ENCODE measurements at regions of chr3 and their contacts with region 1.

Region 1: GRCh38 chr3:101195951-101196713 is 124.2 kb downstream of the IMPG2 start:
- DNase-seq: peak in 1 of 2 donors; percentile 77
- H3K4me3 ChIP-seq: no peak overlapping the region
- H3K27ac ChIP-seq: no peak overlapping the region
- H3K4me1 ChIP-seq: peaks cover 0 to 10% (median 4%) of the 10 kb centered on the region in 4 donors
- H3K27me3 ChIP-seq: no peaks in the 10 kb centered on the region
- CTCF ChIP-seq: peak in 5 of 7 experiments; percentile 23 to 73 (median 59)
- EP300 ChIP-seq: no peak
- POLR2A ChIP-seq: no peak

Region 2: DNA sequence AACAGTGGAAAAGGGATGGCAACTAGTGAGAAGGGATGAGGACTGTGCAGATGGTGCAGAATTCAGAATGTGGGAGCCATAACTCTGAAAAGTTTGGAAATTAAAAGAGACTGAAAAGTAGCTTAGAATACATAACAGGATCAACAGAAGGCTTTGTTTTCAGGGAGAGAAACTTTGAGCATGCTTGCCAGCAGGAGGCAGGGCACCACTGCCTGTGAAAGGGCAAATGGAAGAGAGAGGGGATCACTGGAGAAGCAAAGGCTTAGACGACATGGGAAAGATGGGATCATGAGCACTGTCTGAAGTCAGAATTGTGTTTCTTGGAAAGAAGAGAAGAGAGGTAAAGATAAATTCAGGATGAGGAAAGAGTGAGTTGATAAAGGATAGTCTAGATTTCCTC is 302.5 kb before region 1 on chr3:
- intact Hi-C with region 1: loop called (anchors 10 kb)
- DNase-seq: peak in 1 of 2 donors; percentile 37
- H3K4me3 ChIP-seq: no peak overlapping the region
- H3K27ac ChIP-seq: no peak overlapping the region
- H3K4me1 ChIP-seq: peaks cover 0 to 8% (median under 1%) of the 10 kb centered on the region in 4 donors
- H3K27me3 ChIP-seq: no peaks in the 10 kb centered on the region
- CTCF ChIP-seq: peak in 5 of 7 experiments; percentile 10 to 41 (median 32)
- EP300 ChIP-seq: no peak
- POLR2A ChIP-seq: no peak

Region 3: DNA sequence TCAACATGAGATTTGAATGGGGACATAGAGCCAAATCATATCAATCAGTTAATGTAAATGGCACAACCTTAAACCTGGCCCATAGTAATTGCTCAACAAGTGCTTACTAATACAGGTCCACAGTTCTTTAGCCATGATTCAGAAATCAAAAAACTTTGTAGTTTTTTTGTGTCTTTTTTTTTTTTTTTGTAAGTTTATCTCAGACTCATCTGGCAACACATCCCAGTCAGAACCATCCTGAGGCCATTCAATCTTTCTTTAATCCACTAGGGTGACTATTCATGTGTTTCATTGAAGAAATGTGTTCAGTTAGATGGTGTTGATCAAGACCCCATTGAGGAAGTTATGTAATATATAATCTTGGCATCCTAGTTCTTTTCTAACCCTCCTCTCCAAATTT is 268.4 kb before region 1 on chr3:
- intact Hi-C with region 1: no loop called
- DNase-seq: no peak
- H3K4me3 ChIP-seq: no peak overlapping the region
- H3K27ac ChIP-seq: no peak overlapping the region
- H3K4me1 ChIP-seq: no peaks in the 10 kb centered on the region
- H3K27me3 ChIP-seq: no peaks in the 10 kb centered on the region
- CTCF ChIP-seq: no peak
- EP300 ChIP-seq: no peak
- POLR2A ChIP-seq: no peak

Measured in stomach (tissue), 19 donors.